HAP-1 (cell line): ENCODE measurements at regions of chr9 and their contacts with region 1.

Region 1: DNA sequence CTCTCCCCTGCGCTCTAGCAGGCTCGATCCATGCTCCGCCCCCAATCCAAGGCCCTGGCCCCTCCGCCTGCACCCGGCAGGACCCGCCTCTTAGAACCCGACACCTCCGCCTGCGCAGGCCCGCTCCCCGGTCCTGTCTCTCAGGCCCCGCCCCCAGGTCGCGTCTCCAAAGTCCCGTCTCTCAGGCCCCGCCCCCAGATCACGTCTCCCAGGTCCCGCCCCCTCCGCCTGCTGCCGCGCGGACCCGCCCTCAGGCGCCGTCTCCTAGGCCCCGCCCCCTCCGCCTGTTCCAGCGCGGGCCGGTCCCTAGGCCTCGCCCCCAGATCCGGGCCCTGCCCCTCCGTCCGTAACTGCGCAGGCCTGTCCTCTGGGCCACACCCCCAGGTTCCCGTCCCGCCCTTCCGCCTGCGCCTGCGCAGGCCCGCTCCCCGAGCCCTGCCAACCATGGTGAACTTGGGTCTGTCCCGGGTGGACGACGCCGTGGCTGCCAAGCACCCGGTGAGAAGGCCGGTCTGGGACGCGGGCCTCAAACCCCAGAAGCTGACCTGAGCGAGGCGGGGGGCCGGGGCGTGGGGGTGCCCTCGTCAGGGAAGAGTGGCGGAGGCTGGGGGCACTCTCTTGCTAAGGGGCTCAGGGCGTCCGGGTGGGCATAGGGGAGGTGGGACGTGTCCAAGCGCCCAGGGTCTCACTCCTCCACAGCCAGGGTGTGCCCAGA is at the start of gene TMEM141:
- DNase-seq: peak; percentile 99 to 100
- H3K4me3 ChIP-seq: peak within 1 kb of the TSS; percentile 61
- H3K4me1 ChIP-seq: peaks cover 12% of the 10 kb centered on the region
- H3K27me3 ChIP-seq: no peaks in the 10 kb centered on the region

Region 2: DNA sequence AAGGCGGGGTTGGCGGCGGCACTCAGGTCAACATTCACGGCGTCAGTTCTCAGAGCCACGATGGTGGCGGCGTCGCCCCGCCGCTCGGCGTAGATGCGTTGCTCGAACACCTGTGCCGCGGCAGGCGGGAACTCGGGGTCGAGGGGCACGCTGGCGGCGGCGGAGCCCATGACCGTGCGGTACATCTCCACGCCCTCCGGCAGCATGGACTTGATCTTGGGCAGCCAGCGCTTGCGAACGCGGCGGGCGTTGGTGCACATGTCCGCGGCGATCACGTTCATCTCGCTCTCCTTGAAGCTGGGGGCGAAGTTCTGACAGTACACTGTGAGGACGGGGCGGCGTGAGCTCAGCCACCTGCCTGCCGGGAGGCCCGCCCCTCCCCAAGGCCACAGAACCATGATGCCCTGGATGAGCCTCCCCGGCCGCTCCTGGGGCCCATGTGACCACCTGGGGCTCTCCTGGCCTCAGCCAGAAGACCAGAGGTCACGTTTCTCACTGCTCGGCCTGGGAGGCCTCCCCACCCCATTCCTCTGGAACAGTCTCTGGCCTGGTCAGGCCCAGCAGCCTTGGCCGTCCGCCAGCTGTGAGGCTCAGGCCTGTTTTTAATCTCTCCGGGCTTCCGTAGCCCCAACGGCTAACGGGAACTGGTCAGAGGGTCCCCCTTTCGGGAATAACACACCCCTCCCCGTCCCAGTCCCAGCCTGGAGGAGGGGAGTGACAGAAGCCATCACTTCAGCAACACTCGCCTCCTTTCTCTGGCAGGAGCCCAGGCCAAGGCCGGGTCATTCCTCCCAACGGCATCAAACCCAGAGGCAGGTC is 779.2 kb before region 1 on chr9:
- in situ Hi-C with region 1: no loop called
- DNase-seq: no peak
- H3K4me3 ChIP-seq: no peak overlapping the region
- H3K4me1 ChIP-seq: peaks cover under 1% of the 10 kb centered on the region
- H3K27me3 ChIP-seq: no peaks in the 10 kb centered on the region

Region 3: GRCh38 chr9:137034863-137035761 is 244.0 kb after region 1 on chr9:
- in situ Hi-C with region 1: loop called (anchors 10 kb)
- DNase-seq: peak; percentile 71 to 91
- H3K4me3 ChIP-seq: no peak overlapping the region
- H3K4me1 ChIP-seq: no peaks in the 10 kb centered on the region
- H3K27me3 ChIP-seq: peaks cover 6% of the 10 kb centered on the region; the same call in 1 of the 2 replicates

Region 4: GRCh38 chr9:137240861-137241489 is 449.9 kb after region 1 on chr9 and contains the start of gene TUBB4B:
- in situ Hi-C with region 1: loop called (anchors 25 kb)
- DNase-seq: peak; percentile 99
- H3K4me3 ChIP-seq: peak within 1 kb of the TSS; percentile 82
- H3K4me1 ChIP-seq: peaks cover 11% of the 10 kb centered on the region
- H3K27me3 ChIP-seq: no peaks in the 10 kb centered on the region